ENCODE measurements at regions of chr10 and their contacts with region 1.

Region 1: DNA sequence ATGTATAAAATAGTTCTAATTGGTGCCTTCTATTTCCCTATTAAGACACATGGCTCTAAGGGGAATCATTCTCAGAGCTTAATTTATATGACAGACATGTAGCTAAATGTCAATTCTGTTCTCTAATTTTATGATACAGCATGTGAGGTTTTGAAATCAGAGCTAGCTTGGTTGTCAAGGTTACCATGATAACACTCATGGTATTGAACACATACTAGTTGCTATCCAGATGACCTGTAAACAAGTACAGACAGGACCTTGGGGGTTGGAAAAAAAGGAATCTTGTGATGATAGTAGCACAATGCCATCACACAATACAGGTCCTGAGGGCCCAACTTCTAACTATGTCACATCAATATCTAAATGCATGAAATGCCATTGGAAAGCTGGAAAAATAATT is 49.2 kb downstream of the RHOBTB1 start:
- DNase-seq: peak; percentile 80
- H3K4me3 ChIP-seq: no peak overlapping the region
- H3K27ac ChIP-seq: no peak overlapping the region
- H3K4me1 ChIP-seq: no peaks in the 10 kb centered on the region
- H3K27me3 ChIP-seq: no peaks in the 10 kb centered on the region
- CTCF ChIP-seq: no peak

Region 2: DNA sequence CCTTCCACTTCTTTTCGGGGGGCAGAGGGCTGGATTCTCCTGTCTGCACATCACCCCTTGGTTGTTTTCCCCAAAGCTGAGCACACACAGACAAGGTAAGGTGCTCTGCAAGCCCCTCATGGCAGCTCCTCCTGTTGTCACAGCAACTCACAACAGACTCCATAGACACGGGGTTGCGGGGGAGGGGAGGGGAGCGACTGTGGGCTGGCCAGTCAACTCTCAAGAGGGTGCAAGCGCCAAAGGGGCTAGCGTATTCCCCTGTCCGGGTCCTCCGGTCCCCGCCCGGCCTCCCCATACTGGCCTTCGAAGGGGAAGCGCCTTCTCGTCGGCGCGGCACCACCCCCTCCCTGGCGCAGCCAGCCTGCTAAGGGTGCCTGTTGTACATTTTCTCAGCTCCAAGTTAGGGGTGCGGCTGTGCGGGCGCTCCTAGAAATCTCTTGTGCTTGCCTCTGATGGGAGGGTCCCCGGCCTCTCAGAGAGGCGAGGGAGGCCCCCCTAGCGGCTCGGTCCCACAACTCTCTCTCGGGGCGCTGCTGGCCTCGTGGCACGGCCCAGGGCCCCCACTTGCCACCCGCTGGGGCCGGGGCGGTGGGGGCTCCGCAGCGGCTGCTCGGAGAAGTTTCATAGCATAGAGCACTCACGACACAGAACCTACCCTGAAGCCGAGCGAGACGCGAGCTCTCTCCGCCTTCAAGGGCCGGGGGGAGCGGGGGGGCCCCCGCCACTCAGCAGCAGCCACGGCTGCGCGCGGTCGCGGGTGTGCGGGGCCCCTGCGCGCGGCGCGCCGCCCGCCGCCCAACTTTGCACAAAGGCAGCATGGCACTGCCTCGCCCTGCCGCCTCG is 48.8 kb after region 1 on chr10:
- CTCF ChIA-PET with region 1: no interaction called
- dilution Hi-C with region 1: no loop called
- in situ Hi-C with region 1: no loop called
- intact Hi-C with region 1: loop called (anchors 2 kb)
- DNase-seq: peak; percentile 35
- H3K4me3 ChIP-seq: peak overlapping the region; percentile 56 to 96 (median 64)
- H3K27ac ChIP-seq: peak overlapping the region; percentile 40
- H3K4me1 ChIP-seq: peaks cover 16% of the 10 kb centered on the region
- H3K27me3 ChIP-seq: no peaks in the 10 kb centered on the region
- CTCF ChIP-seq: no peak